SK-N-SH (cell line): ENCODE measurements at regions of chr5 and their contacts with region 1.

Region 1: GRCh38 chr5:5710471-5710870 is 288.0 kb downstream of the ICE1 start:
- DNase-seq: peak; percentile 65
- H3K4me3 ChIP-seq: no peak overlapping the region
- H3K27ac ChIP-seq: peak overlapping the region; percentile 36 to 100; a peak in 3 of 4 replicates
- H3K4me1 ChIP-seq: peaks cover 0 to 39% of the 10 kb centered on the region in 2 experiments; a peak in 2 of 4 replicates
- H3K27me3 ChIP-seq: no peaks in the 10 kb centered on the region
- CTCF ChIP-seq: no peak
- EP300 ChIP-seq: peak; percentile 55 to 99
- RAD21 ChIP-seq: peak; percentile 62

Region 2: GRCh38 chr5:5638211-5638610 is 72.3 kb before region 1 on chr5:
- CTCF ChIA-PET with region 1: interaction called, 3 read pairs
- POLR2A ChIA-PET with region 1: interaction called, 10 read pairs
- DNase-seq: peak; percentile 22
- H3K4me3 ChIP-seq: no peak overlapping the region
- H3K27ac ChIP-seq: peak overlapping the region in 1 of 2 experiments; percentile 98; a peak in 2 of 4 replicates
- H3K4me1 ChIP-seq: peaks cover 0 to 41% of the 10 kb centered on the region in 2 experiments; a peak in 2 of 4 replicates
- H3K27me3 ChIP-seq: no peaks in the 10 kb centered on the region
- CTCF ChIP-seq: no peak
- EP300 ChIP-seq: peak in 1 of 2 experiments; percentile 80; a peak in 2 of 4 replicates
- RAD21 ChIP-seq: peak; percentile 25; the same call in 1 of the 2 replicates

Region 3: GRCh38 chr5:6202149-6202967 is 491.9 kb after region 1 on chr5:
- CTCF ChIA-PET with region 1: interaction called, 13 read pairs
- POLR2A ChIA-PET with region 1: no interaction called
- DNase-seq: peak; percentile 75
- H3K4me3 ChIP-seq: no peak overlapping the region
- H3K27ac ChIP-seq: peak overlapping the region in 1 of 2 experiments; percentile 95; a peak in 2 of 4 replicates
- H3K4me1 ChIP-seq: peaks cover 0 to 46% of the 10 kb centered on the region in 2 experiments; a peak in 2 of 4 replicates
- H3K27me3 ChIP-seq: no peaks in the 10 kb centered on the region
- CTCF ChIP-seq: no peak
- EP300 ChIP-seq: peak in 1 of 2 experiments; percentile 71; a peak in 2 of 4 replicates
- RAD21 ChIP-seq: peak; percentile 48